ENCODE measurements at regions of chr9 and their contacts with region 1.

Region 1: DNA sequence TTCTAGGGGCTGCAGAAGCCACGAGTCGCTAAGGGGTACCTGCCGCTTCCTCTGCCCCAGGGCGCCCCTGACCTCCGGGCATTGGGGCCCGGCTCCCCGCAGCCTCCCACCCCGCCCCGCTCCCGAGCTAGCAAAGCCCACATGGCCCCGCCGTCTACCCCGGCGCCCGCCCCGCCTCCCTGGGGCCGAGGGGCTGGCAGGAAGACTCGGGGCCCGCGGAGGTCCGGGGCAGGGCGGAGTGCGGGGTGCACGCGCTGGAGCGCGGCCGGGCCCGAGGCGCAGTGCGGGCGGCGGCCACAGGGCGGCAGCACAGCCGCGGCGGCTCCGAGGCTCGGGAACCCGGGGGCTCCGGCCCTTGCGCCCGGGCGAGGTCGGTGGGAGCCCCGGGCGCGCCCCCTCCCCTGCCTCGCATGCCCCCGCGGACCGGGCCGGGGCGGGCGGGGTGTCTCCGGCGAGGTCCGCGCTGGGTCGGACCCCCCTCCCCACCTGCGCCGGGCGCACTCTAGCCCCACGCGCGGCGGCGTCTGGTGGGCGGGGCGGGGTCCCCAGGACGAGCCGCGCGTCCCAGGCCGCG is 6.7 kb downstream of the NRARP start:
- ATAC-seq: peak; percentile 57 to 78 (median 65)
- H3K4me3 ChIP-seq: peak overlapping the region; percentile 34 to 57 (median 44)
- H3K27ac ChIP-seq: peak overlapping the region in 1 of 2 donors; percentile 65
- H3K4me1 ChIP-seq: peaks cover 10 to 22% of the 10 kb centered on the region in 2 donors

Region 2: GRCh38 chr9:137390543-137391410 is 95.5 kb after region 1 on chr9:
- in situ Hi-C with region 1: no loop called
- ATAC-seq: peak in 2 of 8 experiments; percentile 13 to 19
- H3K4me3 ChIP-seq: no peak overlapping the region
- H3K27ac ChIP-seq: no peak overlapping the region
- H3K4me1 ChIP-seq: peaks cover 18 to 19% of the 10 kb centered on the region in 2 donors

Region 3: DNA sequence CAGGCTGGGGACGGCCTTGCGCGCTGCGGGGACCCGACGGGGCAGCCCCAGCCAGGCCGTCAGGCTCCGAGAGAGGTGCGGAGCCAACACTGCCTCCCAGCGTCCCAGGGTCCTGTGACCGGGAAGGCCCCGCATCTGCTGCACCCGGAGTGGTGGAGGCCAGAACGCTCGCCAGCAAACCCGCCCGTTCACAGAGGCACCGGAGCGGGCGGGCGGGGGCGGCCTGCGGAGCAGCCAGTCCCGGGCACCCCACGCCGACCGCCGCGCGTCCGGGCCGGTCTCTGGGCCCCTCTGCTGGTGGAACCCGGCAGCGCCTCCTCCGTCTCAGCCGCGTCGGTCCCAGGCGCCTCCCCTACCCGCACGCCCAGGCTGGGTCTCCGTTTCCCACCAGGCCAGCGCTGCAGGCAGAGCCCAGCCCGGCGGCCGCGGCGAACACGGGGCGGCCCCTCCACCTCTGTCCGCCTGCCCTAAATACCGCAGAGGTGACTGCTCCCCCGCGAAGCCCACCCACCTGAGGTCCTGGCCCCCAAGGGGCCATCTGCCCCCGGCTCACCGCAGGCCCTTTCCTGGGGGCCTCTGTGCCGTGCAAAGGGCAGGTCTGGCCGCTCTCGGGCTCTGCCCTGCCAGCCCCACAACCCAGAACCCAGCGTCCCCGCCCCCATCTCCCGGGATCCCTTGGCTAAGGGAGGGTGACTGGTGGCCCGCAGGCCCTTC is 111.7 kb after region 1 on chr9:
- in situ Hi-C with region 1: loop called in 7 of 9 experiments (anchors 10 to 25 kb)
- ATAC-seq: peak; percentile 87 to 98 (median 92)
- H3K4me3 ChIP-seq: peak overlapping the region in 4 of 5 donors; percentile 5 to 18 (median 10)
- H3K27ac ChIP-seq: no peak overlapping the region
- H3K4me1 ChIP-seq: peaks cover 6 to 14% of the 10 kb centered on the region in 2 donors

Region 4: GRCh38 chr9:137564817-137565411 is 269.6 kb after region 1 on chr9:
- in situ Hi-C with region 1: no loop called
- ATAC-seq: peak in 4 of 8 experiments; percentile 7 to 32 (median 14)
- H3K4me3 ChIP-seq: no peak overlapping the region
- H3K27ac ChIP-seq: no peak overlapping the region
- H3K4me1 ChIP-seq: no peaks in the 10 kb centered on the region

Measured in motor neuron (in vitro differentiated cells).